ENCODE measurements at regions of chr1 and their contacts with region 1.

Region 1: DNA sequence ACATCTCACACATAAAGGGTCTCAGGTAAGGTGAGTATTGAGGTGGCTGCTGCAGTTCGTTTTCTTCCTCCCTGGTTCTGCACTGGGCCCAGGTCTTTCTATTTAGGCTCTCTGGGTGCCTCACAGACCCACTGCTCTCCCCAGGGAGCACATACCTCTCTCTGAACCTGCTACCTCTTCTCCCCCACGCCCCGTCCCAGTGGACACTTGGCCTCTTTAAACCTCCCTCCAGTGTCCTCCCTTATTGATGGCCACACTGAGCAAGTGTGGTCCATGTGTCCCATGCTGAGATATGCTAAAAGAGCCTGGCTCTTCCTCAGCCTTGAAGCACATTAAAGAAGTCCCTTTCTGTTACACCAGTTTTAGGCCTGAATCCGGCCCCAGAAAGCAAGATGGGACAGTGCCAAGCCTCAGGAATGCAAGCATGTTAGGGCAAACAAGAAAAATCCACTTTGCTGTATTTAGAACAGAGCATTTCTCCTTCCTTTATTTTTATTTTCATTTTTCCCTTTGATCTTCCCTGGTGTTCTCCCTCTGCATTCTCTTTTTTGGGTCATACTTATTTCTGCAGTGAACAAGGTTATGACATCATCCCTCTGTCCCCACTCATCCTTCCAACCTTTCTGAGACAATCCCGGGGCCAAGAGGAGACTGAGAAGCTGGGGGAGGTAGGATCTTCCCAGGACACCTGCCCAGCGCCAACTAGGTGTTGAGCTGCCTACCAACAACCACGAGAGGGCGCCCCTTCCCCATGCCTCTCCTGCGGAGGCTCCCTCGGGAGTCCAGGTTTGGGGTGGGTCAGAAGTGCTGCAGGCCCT is 5.0 kb upstream of the CHI3L2 start:
- DNase-seq: peak; percentile 63 to 75 (median 68)
- H3K4me3 ChIP-seq: peak overlapping the region; percentile 25 to 39
- H3K4me3 Mint-ChIP-seq: peak overlapping the region; percentile 79 to 95 (median 85)
- H3K27ac ChIP-seq: peak overlapping the region; percentile 54
- H3K27ac Mint-ChIP-seq: peak overlapping the region; percentile 89 to 100 (median 96)
- H3K4me1 ChIP-seq: peaks cover 98% of the 10 kb centered on the region
- H3K4me1 Mint-ChIP-seq: peaks cover 76 to 97% (median 89%) of the 10 kb centered on the region in 4 donors
- H3K27me3 ChIP-seq: no peaks in the 10 kb centered on the region
- H3K27me3 Mint-ChIP-seq: no peaks in the 10 kb centered on the region

Region 2: DNA sequence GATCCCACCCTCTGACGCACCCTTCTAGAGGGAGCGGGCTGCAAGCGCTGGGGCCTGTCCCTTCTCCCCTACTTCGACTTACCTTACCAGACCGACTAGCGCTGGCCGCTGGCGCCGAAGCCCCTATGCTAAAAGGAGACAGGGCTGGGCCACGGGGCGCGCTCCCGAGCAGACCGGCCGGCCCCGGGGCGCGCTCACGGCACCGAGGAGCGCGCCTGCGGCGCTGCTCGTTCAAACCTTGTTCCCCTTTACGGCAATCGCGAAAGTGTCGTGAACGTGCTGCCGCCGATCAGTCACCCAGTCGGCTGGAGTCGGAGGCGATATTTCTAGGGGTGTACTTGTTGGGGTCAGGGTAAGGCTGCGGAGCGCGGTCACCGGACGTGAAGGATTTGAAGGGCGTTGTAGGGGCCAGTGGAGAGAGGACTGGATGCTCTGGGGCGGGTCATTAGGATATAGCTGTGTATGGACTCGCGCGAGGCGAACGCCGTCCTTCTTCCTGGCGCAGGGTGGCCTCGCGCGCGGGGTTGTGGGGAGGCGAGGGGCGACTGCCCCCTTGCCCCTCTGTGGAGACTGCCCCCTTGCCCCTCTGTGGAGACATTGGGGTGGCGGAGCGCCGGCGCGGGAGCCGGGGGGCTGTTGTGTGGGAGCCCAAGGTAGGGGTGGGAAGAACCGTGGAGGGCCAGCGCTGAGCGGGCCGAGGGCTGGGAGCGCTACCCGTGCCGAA is 82.4 kb before region 1 on chr1 and contains the starts of genes CEPT1 and DRAM2:
- CTCF ChIA-PET with region 1: interaction called, 4 read pairs
- POLR2A ChIA-PET with region 1: interaction called, 15 read pairs
- intact Hi-C with region 1: loop called (anchors 2 kb)
- DNase-seq: peak; percentile 89 to 95 (median 91)
- H3K4me3 ChIP-seq: peak within 1 kb of the TSS; percentile 57 to 97
- H3K4me3 Mint-ChIP-seq: peak within 1 kb of the TSS; percentile 98 to 100 (median 100)
- H3K27ac ChIP-seq: peak within 1 kb of the TSS; percentile 79
- H3K27ac Mint-ChIP-seq: peak within 1 kb of the TSS; percentile 84 to 100 (median 99)
- H3K4me1 ChIP-seq: peaks cover 54% of the 10 kb centered on the region
- H3K4me1 Mint-ChIP-seq: peaks cover 32 to 54% (median 41%) of the 10 kb centered on the region in 4 donors
- H3K27me3 ChIP-seq: no peaks in the 10 kb centered on the region
- H3K27me3 Mint-ChIP-seq: no peaks in the 10 kb centered on the region
- total RNA-seq, gene CEPT1: 49.1 to 49.6 TPM
- total RNA-seq, gene DRAM2: 37.5 to 38.8 TPM

Region 3: GRCh38 chr1:111154021-111154999 is 68.2 kb before region 1 on chr1:
- CTCF ChIA-PET with region 1: no interaction called
- POLR2A ChIA-PET with region 1: no interaction called
- intact Hi-C with region 1: no loop called
- DNase-seq: no peak
- H3K4me3 ChIP-seq: no peak overlapping the region
- H3K4me3 Mint-ChIP-seq: peak overlapping the region in 1 of 8 donors; percentile 57
- H3K27ac ChIP-seq: no peak overlapping the region
- H3K27ac Mint-ChIP-seq: peak overlapping the region in 1 of 7 donors; percentile 55
- H3K4me1 ChIP-seq: peaks cover 38% of the 10 kb centered on the region
- H3K4me1 Mint-ChIP-seq: peaks cover 48 to 65% (median 58%) of the 10 kb centered on the region in 4 donors
- H3K27me3 ChIP-seq: no peaks in the 10 kb centered on the region
- H3K27me3 Mint-ChIP-seq: no peaks in the 10 kb centered on the region

Region 4: DNA sequence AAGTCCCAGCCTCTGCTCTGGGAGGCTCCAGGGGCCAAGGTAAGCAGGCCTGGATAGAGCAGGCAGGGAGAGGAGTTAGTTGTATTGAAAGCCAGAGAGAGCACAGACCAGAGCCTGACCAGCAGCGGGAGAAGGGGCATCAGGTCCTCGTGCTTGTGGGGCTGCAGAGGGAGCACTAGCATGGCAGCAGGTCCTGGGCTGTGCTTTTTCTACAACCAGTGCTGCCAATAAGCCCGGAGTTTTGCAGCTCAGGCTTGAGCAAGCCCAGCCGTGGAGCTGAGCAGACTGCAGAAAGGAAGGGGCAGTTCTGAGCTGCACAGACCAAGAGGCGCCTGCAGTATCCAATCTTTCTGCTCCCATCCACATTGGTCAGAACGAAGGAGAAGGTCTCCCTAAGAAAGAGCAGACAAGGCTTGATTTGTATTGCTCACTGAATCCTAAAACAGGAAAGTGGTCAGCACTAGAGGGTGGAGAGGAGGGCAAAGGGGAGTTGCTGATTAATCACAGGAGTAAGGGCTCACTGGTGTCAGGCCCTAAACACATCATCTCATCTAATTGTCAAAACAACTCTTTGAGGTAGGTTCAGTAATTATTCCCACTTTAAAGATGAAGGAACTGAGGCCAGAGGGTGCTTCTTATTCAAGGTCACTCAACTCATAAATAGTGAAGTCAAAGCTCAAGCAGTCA is 24.8 kb before region 1 on chr1:
- CTCF ChIA-PET with region 1: interaction called, 623 read pairs
- POLR2A ChIA-PET with region 1: interaction called, 1,434 read pairs
- intact Hi-C with region 1: loop called (anchors 2 kb)
- DNase-seq: peak; percentile 58 to 78 (median 73)
- H3K4me3 ChIP-seq: peak overlapping the region; percentile 87 to 90
- H3K4me3 Mint-ChIP-seq: peak overlapping the region; percentile 99 to 100 (median 100)
- H3K27ac ChIP-seq: peak overlapping the region; percentile 84
- H3K27ac Mint-ChIP-seq: peak overlapping the region; percentile 92 to 98 (median 97)
- H3K4me1 ChIP-seq: peaks cover 78% of the 10 kb centered on the region
- H3K4me1 Mint-ChIP-seq: peaks cover 61 to 96% (median 71%) of the 10 kb centered on the region in 4 donors
- H3K27me3 ChIP-seq: no peaks in the 10 kb centered on the region
- H3K27me3 Mint-ChIP-seq: no peaks in the 10 kb centered on the region

Region 5: DNA sequence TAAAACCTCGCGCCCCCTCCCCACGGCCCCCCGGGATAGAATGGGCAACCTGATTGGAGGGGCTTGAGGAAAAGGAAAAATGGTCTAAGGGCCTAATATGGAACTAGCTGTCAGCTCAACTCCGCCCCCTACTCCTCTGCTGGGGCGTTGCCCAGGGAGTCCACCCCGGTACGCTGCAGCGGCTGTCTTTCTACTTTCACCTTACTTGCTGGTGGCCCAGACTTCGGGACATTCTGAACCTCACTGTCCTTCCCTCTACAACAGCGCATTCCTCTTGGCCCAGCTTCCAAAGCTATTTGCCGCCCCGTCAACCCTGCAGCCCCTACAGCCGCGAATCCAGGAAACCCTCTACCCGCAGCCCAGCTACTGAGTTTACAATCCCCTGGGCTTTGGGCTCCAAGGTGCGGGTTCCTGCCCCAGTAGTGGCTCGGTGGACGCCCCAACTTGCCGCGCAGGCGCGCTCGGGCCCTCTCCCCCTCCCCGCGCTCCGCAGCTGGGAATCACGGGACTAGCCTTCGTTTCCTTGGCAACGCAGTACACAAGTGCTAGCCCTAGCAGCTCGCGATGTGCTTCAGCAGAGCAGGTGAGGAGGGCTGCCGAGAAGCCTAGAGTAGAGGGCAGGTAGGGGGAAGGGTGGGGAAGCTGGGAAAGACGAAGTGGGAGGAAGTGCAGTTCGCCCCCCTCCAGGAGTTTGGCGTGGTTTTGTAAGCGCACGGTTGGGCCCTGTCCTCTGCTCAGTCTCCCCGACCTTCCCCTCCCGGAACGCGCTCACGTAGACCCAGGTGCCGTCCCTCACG is 123.8 kb after region 1 on chr1:
- CTCF ChIA-PET with region 1: interaction called, 4 read pairs
- POLR2A ChIA-PET with region 1: interaction called, 5 read pairs
- intact Hi-C with region 1: loop called (anchors 5 kb)
- DNase-seq: peak; percentile 92 to 94 (median 94)
- H3K4me3 ChIP-seq: peak overlapping the region; percentile 59 to 82
- H3K4me3 Mint-ChIP-seq: peak overlapping the region; percentile 87 to 96 (median 92)
- H3K27ac ChIP-seq: peak overlapping the region; percentile 46
- H3K27ac Mint-ChIP-seq: peak overlapping the region; percentile 84 to 97 (median 96)
- H3K4me1 ChIP-seq: peaks cover 16% of the 10 kb centered on the region
- H3K4me1 Mint-ChIP-seq: peaks cover 13 to 25% (median 18%) of the 10 kb centered on the region in 4 donors
- H3K27me3 ChIP-seq: no peaks in the 10 kb centered on the region
- H3K27me3 Mint-ChIP-seq: no peaks in the 10 kb centered on the region

Region 6: DNA sequence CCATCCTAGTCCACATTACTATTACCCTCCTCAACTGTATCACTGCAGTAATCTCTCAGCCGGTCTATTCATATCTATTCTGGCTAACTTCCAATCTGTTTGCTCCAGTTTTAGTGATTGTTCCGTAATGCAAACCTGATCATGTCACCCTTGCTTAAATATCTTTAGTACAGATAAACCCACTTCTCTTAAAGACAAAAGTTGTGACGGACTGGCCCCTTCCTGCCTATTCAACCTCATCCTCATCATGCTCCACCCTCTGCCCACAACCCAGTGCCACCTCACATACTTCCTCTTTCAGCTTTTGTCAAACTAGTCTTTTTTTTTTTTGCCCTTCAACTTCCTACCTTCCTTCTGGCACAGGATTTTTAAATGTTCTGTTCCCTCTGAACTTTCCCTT is 248.5 kb after region 1 on chr1:
- CTCF ChIA-PET with region 1: no interaction called
- POLR2A ChIA-PET with region 1: interaction called, 11 read pairs
- intact Hi-C with region 1: no loop called
- DNase-seq: peak; percentile 84 to 95 (median 91)
- H3K4me3 ChIP-seq: peak overlapping the region; percentile 9 to 39
- H3K4me3 Mint-ChIP-seq: no peak overlapping the region
- H3K27ac ChIP-seq: peak overlapping the region; percentile 68
- H3K27ac Mint-ChIP-seq: no peak overlapping the region
- H3K4me1 ChIP-seq: peaks cover 80% of the 10 kb centered on the region
- H3K4me1 Mint-ChIP-seq: peaks cover 18 to 29% (median 25%) of the 10 kb centered on the region in 4 donors
- H3K27me3 ChIP-seq: no peaks in the 10 kb centered on the region
- H3K27me3 Mint-ChIP-seq: no peaks in the 10 kb centered on the region